CD4-positive, alpha-beta T cell (primary cell): ENCODE measurements at regions of chr9 and their contacts with region 1.

Region 1: DNA sequence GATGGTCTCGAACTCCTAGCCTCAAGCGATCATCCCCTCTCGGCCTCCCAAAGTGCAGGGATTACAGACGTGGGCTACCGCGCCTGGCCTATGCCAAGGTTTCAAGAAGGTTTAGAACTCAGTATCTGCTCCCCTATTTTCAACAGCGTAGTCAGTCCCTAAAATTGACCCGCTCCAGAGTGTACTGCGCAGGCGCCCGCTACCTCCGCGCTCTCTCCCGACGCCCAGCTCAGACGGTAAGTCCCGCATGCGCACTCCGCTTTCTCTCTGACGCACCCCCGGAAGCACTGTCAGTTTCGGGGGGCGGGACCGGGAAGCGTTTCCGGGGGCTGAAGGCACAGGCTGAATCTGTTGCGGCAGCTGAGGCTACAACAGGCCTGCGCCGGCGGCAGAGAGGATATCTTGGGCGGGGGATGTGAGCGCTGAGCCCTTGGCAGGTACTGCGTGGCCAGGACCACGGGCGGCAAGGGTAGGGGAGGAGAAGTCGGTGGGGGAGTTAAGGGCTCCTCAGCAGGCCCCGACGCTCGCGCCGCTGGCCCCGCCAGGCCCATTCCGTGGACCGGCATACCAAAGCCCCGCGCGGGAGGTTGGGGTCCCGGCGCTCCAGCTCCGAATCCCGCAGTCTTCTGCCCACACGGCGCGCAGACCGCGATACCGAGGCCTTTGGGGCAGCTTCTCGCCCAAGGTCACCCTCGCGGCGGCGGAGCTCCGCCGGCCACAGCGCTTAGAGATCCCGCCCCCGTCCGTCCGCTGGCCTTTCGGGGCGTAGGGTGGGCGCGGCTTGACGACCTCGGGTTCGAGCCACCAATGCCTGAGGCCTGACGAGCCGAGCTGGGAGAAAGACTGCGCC is at the start of gene ZBTB43:
- DNase-seq: peak; percentile 97 to 99 (median 98)
- ATAC-seq: peak; percentile 85
- H3K4me3 ChIP-seq: peak within 1 kb of the TSS; percentile 75
- H3K4me3 Mint-ChIP-seq: peak within 1 kb of the TSS; percentile 99
- H3K27ac ChIP-seq: peak within 1 kb of the TSS; percentile 79 to 88
- H3K27ac Mint-ChIP-seq: peak within 1 kb of the TSS; percentile 96
- H3K4me1 ChIP-seq: peaks cover 19% of the 10 kb centered on the region
- H3K4me1 Mint-ChIP-seq: peaks cover 49% of the 10 kb centered on the region
- H3K27me3 ChIP-seq: no peaks in the 10 kb centered on the region
- H3K27me3 Mint-ChIP-seq: no peaks in the 10 kb centered on the region
- CTCF ChIP-seq: no peak
- total RNA-seq, gene ZBTB43: 47.7 to 50.8 TPM

Region 2: GRCh38 chr9:126860077-126860756 is 55.3 kb after region 1 on chr9 and contains the start of gene ZBTB34:
- CTCF ChIA-PET with region 1: interaction called, 3 read pairs
- POLR2A ChIA-PET with region 1: no interaction called
- intact Hi-C with region 1: loop called in 1 of 2 experiments (anchors 2 kb)
- DNase-seq: peak; percentile 53 to 85 (median 72)
- ATAC-seq: peak; percentile 84
- H3K4me3 ChIP-seq: peak within 1 kb of the TSS; percentile 74
- H3K4me3 Mint-ChIP-seq: peak within 1 kb of the TSS; percentile 95
- H3K27ac ChIP-seq: peak within 1 kb of the TSS in 1 of 2 donors; percentile 22
- H3K27ac Mint-ChIP-seq: peak within 1 kb of the TSS; percentile 74
- H3K4me1 ChIP-seq: peaks cover 26% of the 10 kb centered on the region
- H3K4me1 Mint-ChIP-seq: peaks cover 31% of the 10 kb centered on the region
- H3K27me3 ChIP-seq: peaks cover 0 to 3% of the 10 kb centered on the region in 2 experiments
- H3K27me3 Mint-ChIP-seq: peaks cover 9% of the 10 kb centered on the region
- CTCF ChIP-seq: peak; percentile 100
- total RNA-seq, gene ZBTB34: 2.5 to 2.9 TPM